T-cell (primary cell): ENCODE measurements at regions of chr12 and their contacts with region 1.

Region 1: GRCh38 chr12:8226355-8226754 is 1.1 kb downstream of the FAM90A1 start:
- DNase-seq: no peak
- ATAC-seq: no peak
- H3K4me3 ChIP-seq: no peak overlapping the region
- H3K4me3 Mint-ChIP-seq: peak overlapping the region in 1 of 3 donors; percentile 76
- H3K27ac ChIP-seq: no peak overlapping the region
- H3K27ac Mint-ChIP-seq: no peak overlapping the region
- H3K4me1 ChIP-seq: peaks cover 0 to 3% of the 10 kb centered on the region in 2 experiments
- H3K4me1 Mint-ChIP-seq: peaks cover 2 to 17% (median 3%) of the 10 kb centered on the region in 3 donors
- H3K27me3 ChIP-seq: peaks cover 0 to 5% of the 10 kb centered on the region in 2 experiments
- H3K27me3 Mint-ChIP-seq: peaks cover 0 to 6% of the 10 kb centered on the region in 2 donors

Region 2: DNA sequence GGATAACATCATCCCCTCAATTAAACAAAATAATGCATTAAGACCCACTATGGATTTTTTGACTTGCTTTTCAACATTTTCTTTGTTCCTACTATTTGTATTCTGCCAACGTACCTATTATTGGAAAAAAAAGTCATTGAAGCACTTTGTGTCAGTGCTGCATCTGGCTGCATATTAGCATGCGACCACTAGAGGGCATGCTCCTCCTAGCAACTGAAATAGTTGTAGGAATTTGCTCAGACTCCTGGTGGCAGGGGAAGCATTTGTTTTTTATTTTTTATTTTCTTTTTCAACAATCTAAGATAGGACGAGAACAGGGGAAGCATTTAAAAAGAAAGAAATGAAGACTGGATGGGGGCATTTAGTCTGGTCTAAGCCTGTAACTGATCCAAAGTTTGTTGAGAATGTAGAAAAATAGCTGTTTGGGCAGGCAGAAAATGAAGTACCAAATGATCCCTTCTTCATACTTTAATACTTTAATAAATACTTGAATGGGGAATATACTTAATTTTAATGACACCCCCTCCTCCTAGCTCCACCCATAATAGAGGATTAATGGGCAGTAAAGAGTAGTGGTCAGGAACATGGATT is 117.5 kb before region 1 on chr12:
- CTCF ChIA-PET with region 1: interaction called in 1 of 2 experiments, 12 read pairs
- POLR2A ChIA-PET with region 1: no interaction called
- DNase-seq: peak; percentile 47 to 86 (median 71)
- ATAC-seq: peak; percentile 64 to 83 (median 80)
- H3K4me3 ChIP-seq: no peak overlapping the region
- H3K4me3 Mint-ChIP-seq: no peak overlapping the region
- H3K27ac ChIP-seq: no peak overlapping the region
- H3K27ac Mint-ChIP-seq: peak overlapping the region in 1 of 2 donors; percentile 47
- H3K4me1 ChIP-seq: no peaks in the 10 kb centered on the region
- H3K4me1 Mint-ChIP-seq: peaks cover 0 to 4% (median 4%) of the 10 kb centered on the region in 3 donors
- H3K27me3 ChIP-seq: no peaks in the 10 kb centered on the region
- H3K27me3 Mint-ChIP-seq: no peaks in the 10 kb centered on the region